Common myeloid progenitor, CD34-positive (primary cell): ENCODE measurements at regions of chr2 and their contacts with region 1.

Region 1: DNA sequence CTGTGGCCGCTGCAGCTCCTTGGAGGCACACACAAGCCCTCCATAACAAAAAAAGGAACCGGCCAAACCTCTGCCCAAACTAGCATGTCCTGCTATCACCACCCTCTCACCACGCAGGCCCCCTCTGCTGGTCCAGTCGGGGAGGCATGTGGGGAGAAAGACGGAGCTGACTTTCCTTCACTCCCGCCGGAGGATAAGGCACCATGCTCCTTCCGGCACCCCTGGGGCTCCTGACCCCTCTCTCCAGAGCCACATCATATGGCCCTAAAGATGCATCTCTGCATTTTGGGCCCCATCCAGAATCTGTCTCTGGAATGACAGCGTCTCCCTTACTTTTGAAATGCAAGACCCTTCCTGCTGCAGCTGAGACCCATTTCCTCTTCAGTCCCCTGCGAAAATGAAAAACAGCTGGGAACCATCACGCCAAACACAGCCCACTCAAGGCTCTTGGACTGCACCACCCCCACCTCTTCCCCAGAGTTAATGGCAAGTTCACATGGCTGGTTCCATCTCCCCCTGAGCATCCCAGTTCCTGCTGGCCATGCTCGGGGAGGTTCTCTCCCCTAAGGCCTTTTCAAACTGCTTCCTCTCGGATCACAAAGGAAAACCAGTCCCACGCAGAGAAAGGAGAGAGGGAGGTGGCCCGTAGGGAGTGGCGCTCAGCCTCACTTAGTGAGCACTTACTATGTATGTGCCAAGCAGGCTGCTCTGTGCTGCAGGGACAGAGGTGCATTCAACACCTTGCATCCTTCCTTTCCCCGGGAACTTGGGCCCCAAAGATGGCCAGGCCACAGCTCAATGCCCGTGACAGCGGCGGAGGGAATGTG is 35.2 kb upstream of the MLPH start:
- DNase-seq: no peak
- H3K4me3 ChIP-seq: no peak overlapping the region
- H3K27ac ChIP-seq: no peak overlapping the region
- H3K4me1 ChIP-seq: peaks cover 0 to 61% (median 37%) of the 10 kb centered on the region in 4 experiments
- H3K27me3 ChIP-seq: no peaks in the 10 kb centered on the region

Region 2: GRCh38 chr2:237421542-237422116 is 30.2 kb before region 1 on chr2:
- CTCF ChIA-PET with region 1: interaction called, 15 read pairs
- POLR2A ChIA-PET with region 1: no interaction called
- DNase-seq: peak; percentile 73 to 74 (median 74)
- H3K4me3 ChIP-seq: peak overlapping the region in 2 of 7 experiments; percentile 19 to 57
- H3K27ac ChIP-seq: no peak overlapping the region
- H3K4me1 ChIP-seq: peaks cover 0 to 8% (median 3%) of the 10 kb centered on the region in 4 experiments
- H3K27me3 ChIP-seq: peaks cover 0 to 9% (median 0%) of the 10 kb centered on the region in 5 experiments

Region 3: GRCh38 chr2:237434866-237435311 is 17.0 kb before region 1 on chr2:
- CTCF ChIA-PET with region 1: interaction called, 23 read pairs
- POLR2A ChIA-PET with region 1: no interaction called
- DNase-seq: peak; percentile 69 to 90 (median 87)
- H3K4me3 ChIP-seq: peak overlapping the region in 5 of 7 experiments; percentile 4 to 43 (median 6)
- H3K27ac ChIP-seq: peak overlapping the region in 1 of 2 experiments; percentile 12
- H3K4me1 ChIP-seq: peaks cover 13 to 64% (median 55%) of the 10 kb centered on the region in 4 experiments
- H3K27me3 ChIP-seq: no peaks in the 10 kb centered on the region

Region 4: GRCh38 chr2:237441605-237442274 is 10.1 kb before region 1 on chr2:
- CTCF ChIA-PET with region 1: interaction called, 11 read pairs
- POLR2A ChIA-PET with region 1: no interaction called
- DNase-seq: no peak
- H3K4me3 ChIP-seq: no peak overlapping the region
- H3K27ac ChIP-seq: no peak overlapping the region
- H3K4me1 ChIP-seq: peaks cover 0 to 20% (median 18%) of the 10 kb centered on the region in 4 experiments
- H3K27me3 ChIP-seq: no peaks in the 10 kb centered on the region

Region 5: DNA sequence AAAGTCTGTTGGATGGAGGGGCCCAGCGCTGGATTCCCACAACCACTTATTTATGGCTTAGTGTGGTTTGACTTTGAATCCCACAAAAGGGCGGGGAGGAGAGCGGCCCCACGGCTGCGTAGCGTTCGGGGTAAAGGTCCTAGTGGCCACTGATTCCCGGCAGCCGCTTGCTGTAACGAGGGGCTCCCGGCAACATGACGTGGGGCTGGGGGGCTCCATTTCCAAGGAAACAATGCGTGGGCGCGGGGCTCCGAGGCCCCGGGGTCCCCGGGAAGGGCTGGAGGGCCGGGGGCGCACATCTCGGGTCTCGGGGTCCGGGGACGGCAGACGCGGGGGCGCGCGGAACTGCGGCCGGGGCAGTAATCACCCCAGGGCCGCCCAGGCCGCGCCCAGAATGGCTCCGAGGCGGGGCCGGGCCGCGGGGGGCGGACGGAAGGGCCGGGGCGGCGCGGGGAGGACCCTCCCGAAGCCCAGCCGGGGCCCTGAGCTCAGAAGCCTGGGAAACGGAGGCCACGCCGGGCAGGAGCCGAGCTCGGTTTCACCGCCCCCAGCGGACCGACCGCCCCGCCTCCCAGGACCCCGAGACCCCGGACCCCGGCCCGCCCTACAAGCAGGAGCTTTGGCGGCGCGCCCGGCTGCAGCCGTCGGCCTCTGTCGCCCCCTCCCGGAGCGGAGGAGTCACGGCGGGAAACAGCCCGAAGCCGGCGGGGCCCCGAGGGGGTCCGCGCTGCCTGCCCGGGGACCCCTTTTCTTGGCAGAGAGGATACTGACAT is 23.3 kb after region 1 on chr2:
- CTCF ChIA-PET with region 1: interaction called, 16 read pairs
- POLR2A ChIA-PET with region 1: no interaction called
- DNase-seq: peak; percentile 61 to 83 (median 80)
- H3K4me3 ChIP-seq: peak overlapping the region; percentile 40 to 83 (median 68)
- H3K27ac ChIP-seq: peak overlapping the region; percentile 51 to 73
- H3K4me1 ChIP-seq: peaks cover 0 to 34% (median 26%) of the 10 kb centered on the region in 4 experiments
- H3K27me3 ChIP-seq: peaks cover 0 to 14% (median 10%) of the 10 kb centered on the region in 5 experiments